Panc1 (cell line): ENCODE measurements at regions of chr10 and their contacts with region 1.

Region 1: GRCh38 chr10:76681153-76681552 is 956.5 kb downstream of the KCNMA1 start:
- DNase-seq: no peak
- ATAC-seq: no peak
- H3K4me3 ChIP-seq: no peak overlapping the region
- H3K27ac ChIP-seq: no peak overlapping the region
- H3K4me1 ChIP-seq: no peaks in the 10 kb centered on the region
- H3K27me3 ChIP-seq: peaks cover 19% of the 10 kb centered on the region; the same call in 1 of the 2 replicates
- CTCF ChIP-seq: no peak

Region 2: DNA sequence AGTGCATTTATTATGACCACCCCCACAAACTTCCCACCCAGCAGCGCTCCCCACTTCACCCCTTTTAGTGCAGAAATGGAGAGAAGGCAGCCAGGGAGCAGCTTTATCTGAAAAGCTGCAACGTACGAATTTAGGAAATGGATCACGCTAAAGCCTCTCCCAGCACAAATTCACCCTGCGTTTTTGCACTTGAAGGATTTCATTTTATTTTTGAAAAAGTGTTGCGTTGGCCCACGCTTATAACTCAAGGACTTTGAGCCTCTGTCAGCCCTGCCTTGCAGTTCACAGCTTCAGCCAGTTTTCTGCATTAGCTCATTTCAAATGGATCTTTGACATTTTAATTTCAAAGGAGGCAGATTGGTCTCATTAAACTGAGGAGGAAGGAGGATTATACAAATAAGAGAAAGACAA is 400.3 kb after region 1 on chr10:
- CTCF ChIA-PET with region 1: no interaction called
- POLR2A ChIA-PET with region 1: interaction called, 12 read pairs
- in situ Hi-C with region 1: no loop called
- intact Hi-C with region 1: no loop called
- DNase-seq: no peak
- ATAC-seq: no peak
- H3K4me3 ChIP-seq: no peak overlapping the region
- H3K27ac ChIP-seq: no peak overlapping the region
- H3K4me1 ChIP-seq: no peaks in the 10 kb centered on the region
- H3K27me3 ChIP-seq: no peaks in the 10 kb centered on the region
- CTCF ChIP-seq: no peak